Activated T-helper 1 cell treated with anti-CD3 and anti-CD28 coated beads, Interleukin-12 subunit alpha, Interleukin-12 subunit beta, Interleukin-2, Interleukin-4 antibody, amounts not matched to agents 30 ng/mL and 10 ng/mL and 1 ng/mL, durations not matched to agents 14 hours and 24 hours and 36 hours (primary cell): ENCODE measurements at regions of chr1 and their contacts with region 1.

Region 1: DNA sequence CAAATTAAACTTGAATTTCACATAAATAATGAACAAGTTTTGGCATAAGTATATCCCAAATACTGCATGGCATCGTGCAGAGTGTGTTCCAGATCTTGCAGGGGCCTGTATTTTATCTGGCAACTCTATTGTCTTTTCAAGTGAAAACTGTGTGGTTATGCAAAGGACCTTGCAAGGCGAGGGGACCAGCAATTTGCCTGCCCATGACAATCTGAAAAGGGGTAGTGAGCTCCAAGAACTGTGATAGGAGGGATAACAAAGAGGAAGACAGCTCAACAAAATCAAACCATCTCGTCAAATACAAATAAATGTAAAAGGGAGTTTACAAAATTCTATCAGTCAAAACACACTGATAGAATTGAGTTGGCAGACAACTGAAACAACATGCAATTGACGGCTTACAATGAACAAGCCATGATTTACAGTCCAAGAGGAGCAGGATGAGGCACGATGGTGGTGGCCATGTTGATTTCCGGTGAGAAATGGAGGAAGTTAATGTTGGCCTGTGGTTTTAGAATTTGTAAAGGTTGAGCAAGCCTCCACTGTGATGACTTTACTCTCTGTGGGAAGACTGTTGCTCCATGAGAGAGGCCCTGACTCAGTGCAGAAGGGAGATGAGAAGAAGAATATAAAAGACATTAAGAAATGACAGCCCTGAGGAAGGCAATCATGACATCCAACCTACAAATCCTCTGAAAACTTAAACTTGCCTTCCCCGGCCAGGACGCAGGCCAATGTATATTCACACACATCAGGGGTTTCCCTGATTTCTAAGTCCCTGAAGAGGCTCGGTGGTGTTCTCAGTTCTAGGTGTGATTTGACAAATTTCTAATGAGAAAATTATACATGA is 132.2 kb downstream of the ADSS2 start:
- DNase-seq: peak; percentile 59
- H3K4me3 Mint-ChIP-seq: peak overlapping the region; percentile 62
- H3K27ac Mint-ChIP-seq: peak overlapping the region; percentile 89
- H3K4me1 Mint-ChIP-seq: peaks cover 54% of the 10 kb centered on the region
- H3K27me3 Mint-ChIP-seq: peaks cover 1% of the 10 kb centered on the region

Region 2: GRCh38 chr1:243596431-243597062 is 723.0 kb before region 1 on chr1:
- intact Hi-C with region 1: loop called (anchors 5 kb)
- DNase-seq: peak; percentile 32
- H3K4me3 Mint-ChIP-seq: peak overlapping the region; percentile 75
- H3K27ac Mint-ChIP-seq: peak overlapping the region; percentile 94
- H3K4me1 Mint-ChIP-seq: peaks cover 32% of the 10 kb centered on the region
- H3K27me3 Mint-ChIP-seq: no peaks in the 10 kb centered on the region

Region 3: GRCh38 chr1:244047621-244048471 is 271.7 kb before region 1 on chr1:
- intact Hi-C with region 1: loop called (anchors 2 kb)
- DNase-seq: peak; percentile 93
- H3K4me3 Mint-ChIP-seq: peak overlapping the region; percentile 92
- H3K27ac Mint-ChIP-seq: peak overlapping the region; percentile 91
- H3K4me1 Mint-ChIP-seq: peaks cover 36% of the 10 kb centered on the region
- H3K27me3 Mint-ChIP-seq: peaks cover 30% of the 10 kb centered on the region

Region 4: GRCh38 chr1:244353551-244354091 is 34.1 kb after region 1 on chr1:
- intact Hi-C with region 1: loop called (anchors 1 kb)
- DNase-seq: peak; percentile 5
- H3K4me3 Mint-ChIP-seq: no peak overlapping the region
- H3K27ac Mint-ChIP-seq: peak overlapping the region; percentile 73
- H3K4me1 Mint-ChIP-seq: peaks cover 47% of the 10 kb centered on the region
- H3K27me3 Mint-ChIP-seq: no peaks in the 10 kb centered on the region

Region 5: DNA sequence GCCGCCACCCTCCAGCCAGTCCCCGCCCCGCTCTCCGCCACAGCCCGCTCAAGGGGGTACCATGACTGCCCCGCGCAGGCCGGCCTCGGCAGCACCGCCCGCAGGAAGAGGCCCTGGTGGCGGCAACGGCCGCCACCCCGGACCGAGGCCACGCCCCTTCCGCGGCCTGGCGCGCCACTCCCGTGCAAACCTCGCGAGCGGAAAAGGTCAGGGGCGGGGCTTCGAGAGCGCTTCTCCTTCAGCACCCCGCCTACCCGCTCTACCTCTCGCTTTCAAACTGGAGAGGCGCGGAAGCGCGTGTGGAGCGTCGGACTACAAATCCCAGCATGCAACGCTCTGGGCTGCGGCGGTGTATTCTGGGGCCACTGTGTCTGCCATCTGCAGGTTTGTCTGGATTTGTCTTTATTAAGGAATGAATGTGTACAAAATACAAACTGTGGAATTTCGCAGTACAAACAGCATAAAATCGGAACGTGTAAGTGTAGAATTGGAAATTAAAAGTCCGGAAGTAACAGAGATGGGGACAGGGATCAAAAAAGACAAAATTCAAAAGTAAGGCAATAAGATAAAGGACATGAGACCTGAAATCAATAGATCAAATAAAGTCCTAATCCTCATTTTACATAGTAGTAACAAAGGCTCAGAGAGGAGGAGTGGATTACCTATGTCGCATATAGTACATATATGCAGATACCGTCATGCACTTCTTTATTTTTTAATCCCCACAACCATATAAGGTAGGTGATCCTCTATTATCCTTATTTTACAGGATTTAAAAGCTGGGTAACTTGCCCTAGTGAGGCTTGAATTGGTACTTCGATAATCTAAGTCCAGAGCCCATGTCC is 132.7 kb after region 1 on chr1:
- intact Hi-C with region 1: loop called (anchors 1 kb)
- DNase-seq: peak; percentile 98
- H3K4me3 Mint-ChIP-seq: peak overlapping the region; percentile 95
- H3K27ac Mint-ChIP-seq: peak overlapping the region; percentile 96
- H3K4me1 Mint-ChIP-seq: peaks cover 41% of the 10 kb centered on the region
- H3K27me3 Mint-ChIP-seq: no peaks in the 10 kb centered on the region

Region 6: DNA sequence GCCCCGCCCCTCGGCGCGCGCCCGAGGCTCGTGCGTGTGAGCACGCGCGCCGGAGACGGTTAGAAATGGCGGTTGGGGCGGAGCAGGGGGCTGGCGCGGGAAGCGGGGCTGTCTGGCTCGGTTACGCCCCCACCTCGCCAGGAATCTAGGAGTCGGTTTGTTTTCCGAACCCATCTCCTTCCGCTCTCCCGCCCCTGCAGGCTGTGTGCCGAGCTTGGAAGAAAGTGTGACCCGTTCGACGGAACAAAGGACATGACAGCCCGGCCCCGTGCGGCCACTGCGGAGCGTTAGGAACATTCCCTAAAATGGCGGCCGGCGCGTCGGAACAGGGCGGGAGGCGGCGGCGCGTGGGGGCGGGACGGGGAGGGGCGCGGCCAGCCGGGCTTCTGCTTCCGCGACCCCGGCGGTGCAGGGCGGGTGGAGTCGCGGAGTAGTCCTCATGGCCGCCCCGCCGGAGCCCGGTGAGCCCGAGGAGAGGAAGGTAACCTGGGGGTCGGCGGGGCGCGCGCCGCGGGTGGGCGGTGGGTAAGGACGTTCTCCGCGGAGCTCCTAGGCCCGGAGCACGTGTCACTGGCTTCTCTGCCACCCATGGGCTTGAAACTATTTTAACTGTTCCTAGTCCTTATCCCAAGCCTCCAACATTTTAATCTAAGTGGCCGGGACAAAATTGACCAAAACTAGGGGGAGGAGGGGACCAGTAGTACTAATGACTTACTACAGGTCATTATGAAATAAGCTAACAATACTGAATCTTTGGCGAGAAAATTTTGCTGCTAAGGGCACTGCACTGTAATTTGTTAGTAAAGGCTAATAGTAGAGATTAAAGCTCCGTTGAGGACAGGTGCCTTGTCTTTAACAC is 516.0 kb after region 1 on chr1 and contains the start of gene COX20:
- intact Hi-C with region 1: loop called (anchors 10 kb)
- DNase-seq: peak; percentile 85
- H3K4me3 Mint-ChIP-seq: peak within 1 kb of the TSS; percentile 96
- H3K27ac Mint-ChIP-seq: peak within 1 kb of the TSS; percentile 99
- H3K4me1 Mint-ChIP-seq: peaks cover 56% of the 10 kb centered on the region
- H3K27me3 Mint-ChIP-seq: no peaks in the 10 kb centered on the region
- total RNA-seq, gene COX20: 27.4 and 27.6 TPM in 2 replicates

Region 7: GRCh38 chr1:244970661-244971551 is 651.4 kb after region 1 on chr1:
- intact Hi-C with region 1: loop called (anchors 2 kb)
- DNase-seq: peak; percentile 82
- H3K4me3 Mint-ChIP-seq: peak overlapping the region; percentile 92
- H3K27ac Mint-ChIP-seq: peak overlapping the region; percentile 98
- H3K4me1 Mint-ChIP-seq: peaks cover 21% of the 10 kb centered on the region
- H3K27me3 Mint-ChIP-seq: peaks cover 2% of the 10 kb centered on the region